ENCODE measurements at regions of chr19 and their contacts with region 1.

Region 1: DNA sequence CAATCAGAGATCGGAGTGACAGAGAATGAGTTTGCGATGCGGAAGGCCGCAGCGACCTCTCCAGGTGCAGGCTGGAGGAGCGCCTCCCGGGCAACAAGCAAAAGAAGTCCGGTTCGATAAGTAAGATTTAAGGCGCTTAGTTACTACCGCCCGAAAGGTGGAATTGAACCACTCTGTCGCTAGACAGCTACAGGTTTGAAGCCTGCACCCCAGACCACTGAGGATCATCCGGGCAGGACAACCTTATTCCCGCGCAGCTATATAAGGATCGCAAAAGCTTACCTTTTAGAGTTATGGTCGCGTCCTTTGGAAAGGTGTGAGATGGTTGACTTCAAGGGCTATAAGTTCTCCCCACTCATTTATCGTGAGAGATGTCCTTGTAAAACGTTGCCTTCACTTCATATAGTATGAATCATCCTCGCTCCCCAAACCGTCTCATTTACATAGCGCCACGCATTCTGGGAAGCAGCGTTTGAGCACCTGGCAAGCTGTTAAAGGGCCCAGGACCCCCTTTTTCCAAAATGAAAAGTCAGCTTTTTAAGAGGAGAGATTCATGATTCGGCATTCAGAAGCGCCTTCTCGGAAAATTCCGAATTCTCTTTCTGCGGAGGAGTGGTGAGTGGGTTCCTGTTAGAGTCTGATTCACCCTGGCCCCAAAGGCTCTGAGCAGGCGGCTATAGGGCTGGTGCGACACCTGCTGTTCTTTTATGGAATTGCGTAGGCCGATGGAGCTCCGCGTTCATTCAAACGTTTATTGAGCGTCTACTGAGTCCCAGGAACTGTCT is 10.8 kb downstream of the FOSB start:
- DNase-seq: peak in 1 of 2 experiments; percentile 94
- H3K4me3 ChIP-seq: peak overlapping the region; percentile 44 to 82 (median 75); a peak in 7 of 8 replicates
- H3K27ac ChIP-seq: peak overlapping the region; percentile 97
- H3K4me1 ChIP-seq: peaks cover 2 to 5% (median 3%) of the 10 kb centered on the region in 4 experiments
- H3K27me3 ChIP-seq: no peaks in the 10 kb centered on the region; a peak in 2 of 7 replicates
- CTCF ChIP-seq: peak; percentile 87 to 93 (median 91)
- EP300 ChIP-seq: no peak
- POLR2A ChIP-seq: peak in 1 of 2 experiments; percentile 71; a peak in 2 of 3 replicates
- RAD21 ChIP-seq: peak; percentile 90

Region 2: GRCh38 chr19:45231891-45232290 is 246.8 kb before region 1 on chr19:
- CTCF ChIA-PET with region 1: no interaction called
- POLR2A ChIA-PET with region 1: no interaction called
- DNase-seq: no peak
- H3K4me3 ChIP-seq: no peak overlapping the region
- H3K27ac ChIP-seq: no peak overlapping the region
- H3K4me1 ChIP-seq: peaks cover 0 to 8% (median 5%) of the 10 kb centered on the region in 4 experiments; a peak in 4 of 7 replicates
- H3K27me3 ChIP-seq: peaks cover 26 to 43% (median 40%) of the 10 kb centered on the region in 4 experiments
- CTCF ChIP-seq: no peak
- EP300 ChIP-seq: no peak
- POLR2A ChIP-seq: no peak
- RAD21 ChIP-seq: no peak

Region 3: GRCh38 chr19:45413497-45413896 is 65.1 kb before region 1 on chr19:
- CTCF ChIA-PET with region 1: interaction called, 15 read pairs
- POLR2A ChIA-PET with region 1: interaction called, 3 read pairs
- DNase-seq: no peak
- H3K4me3 ChIP-seq: no peak overlapping the region
- H3K27ac ChIP-seq: no peak overlapping the region
- H3K4me1 ChIP-seq: no peaks in the 10 kb centered on the region
- H3K27me3 ChIP-seq: no peaks in the 10 kb centered on the region
- CTCF ChIP-seq: no peak
- EP300 ChIP-seq: no peak
- POLR2A ChIP-seq: no peak
- RAD21 ChIP-seq: no peak